Activated CD4-positive, alpha-beta T cell treated with anti-CD3 and anti-CD28 coated beads for 36 hours (primary cell): ENCODE measurements at regions of chr4 and their contacts with region 1.

Region 1: GRCh38 chr4:73662709-73663546 is 42.7 kb upstream of the RASSF6 start:
- DNase-seq: no peak
- ATAC-seq: peak; percentile 33
- H3K4me3 Mint-ChIP-seq: no peak overlapping the region
- H3K27ac Mint-ChIP-seq: no peak overlapping the region
- H3K4me1 Mint-ChIP-seq: peaks cover 3% of the 10 kb centered on the region
- H3K27me3 Mint-ChIP-seq: peaks cover 2% of the 10 kb centered on the region

Region 2: DNA sequence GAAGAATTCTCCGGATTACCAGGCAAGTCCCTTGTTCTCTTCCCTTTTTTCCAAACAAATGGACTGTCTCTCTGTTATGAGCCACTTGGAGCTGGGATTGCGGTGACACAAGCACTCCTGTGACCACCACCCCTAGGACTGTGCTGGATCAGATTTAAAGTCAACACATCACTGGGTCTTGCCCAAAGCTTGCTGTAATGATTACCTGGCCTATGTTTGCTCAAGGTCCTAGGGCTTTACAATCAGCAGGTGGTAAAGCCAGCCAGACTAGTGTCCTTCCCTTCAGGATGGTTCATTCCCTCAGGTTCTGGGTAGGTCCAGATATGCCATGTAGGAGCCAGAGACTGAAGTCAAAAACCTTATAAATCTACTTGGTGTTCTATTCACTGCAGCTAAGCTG is 738.1 kb before region 1 on chr4:
- CTCF ChIA-PET with region 1: no interaction called
- POLR2A ChIA-PET with region 1: no interaction called
- intact Hi-C with region 1: no loop called
- DNase-seq: no peak
- ATAC-seq: no peak
- H3K4me3 Mint-ChIP-seq: no peak overlapping the region
- H3K27ac Mint-ChIP-seq: no peak overlapping the region
- H3K4me1 Mint-ChIP-seq: no peaks in the 10 kb centered on the region
- H3K27me3 Mint-ChIP-seq: no peaks in the 10 kb centered on the region

Region 3: DNA sequence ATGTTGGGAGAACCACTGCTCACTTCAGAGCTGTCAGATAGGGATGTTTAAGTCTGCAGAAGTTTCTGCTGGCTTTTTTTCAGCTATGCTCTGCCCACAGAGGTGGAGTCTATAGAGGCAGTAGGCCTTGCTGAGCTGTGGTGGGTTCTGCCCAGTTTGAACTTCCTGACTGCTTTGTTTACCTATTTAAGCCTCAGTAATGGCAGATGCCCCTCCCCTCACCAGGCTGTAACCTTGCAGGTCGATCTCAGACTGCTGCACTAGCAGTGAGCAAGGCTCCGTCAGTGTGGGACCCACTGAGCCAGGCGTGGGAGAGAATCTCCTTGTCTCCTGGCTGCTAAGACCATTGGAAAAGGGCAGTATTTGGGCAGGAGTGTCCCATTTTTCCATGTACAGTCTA is 144.6 kb before region 1 on chr4:
- CTCF ChIA-PET with region 1: no interaction called
- POLR2A ChIA-PET with region 1: no interaction called
- intact Hi-C with region 1: no loop called
- DNase-seq: no peak
- ATAC-seq: no peak
- H3K4me3 Mint-ChIP-seq: no peak overlapping the region
- H3K27ac Mint-ChIP-seq: no peak overlapping the region
- H3K4me1 Mint-ChIP-seq: no peaks in the 10 kb centered on the region
- H3K27me3 Mint-ChIP-seq: peaks cover 9% of the 10 kb centered on the region

Region 4: GRCh38 chr4:73698217-73698616 is 35.3 kb after region 1 on chr4:
- CTCF ChIA-PET with region 1: no interaction called
- POLR2A ChIA-PET with region 1: no interaction called
- intact Hi-C with region 1: no loop called
- DNase-seq: no peak
- ATAC-seq: no peak
- H3K4me3 Mint-ChIP-seq: no peak overlapping the region
- H3K27ac Mint-ChIP-seq: no peak overlapping the region
- H3K4me1 Mint-ChIP-seq: no peaks in the 10 kb centered on the region
- H3K27me3 Mint-ChIP-seq: peaks cover 3% of the 10 kb centered on the region

Region 5: DNA sequence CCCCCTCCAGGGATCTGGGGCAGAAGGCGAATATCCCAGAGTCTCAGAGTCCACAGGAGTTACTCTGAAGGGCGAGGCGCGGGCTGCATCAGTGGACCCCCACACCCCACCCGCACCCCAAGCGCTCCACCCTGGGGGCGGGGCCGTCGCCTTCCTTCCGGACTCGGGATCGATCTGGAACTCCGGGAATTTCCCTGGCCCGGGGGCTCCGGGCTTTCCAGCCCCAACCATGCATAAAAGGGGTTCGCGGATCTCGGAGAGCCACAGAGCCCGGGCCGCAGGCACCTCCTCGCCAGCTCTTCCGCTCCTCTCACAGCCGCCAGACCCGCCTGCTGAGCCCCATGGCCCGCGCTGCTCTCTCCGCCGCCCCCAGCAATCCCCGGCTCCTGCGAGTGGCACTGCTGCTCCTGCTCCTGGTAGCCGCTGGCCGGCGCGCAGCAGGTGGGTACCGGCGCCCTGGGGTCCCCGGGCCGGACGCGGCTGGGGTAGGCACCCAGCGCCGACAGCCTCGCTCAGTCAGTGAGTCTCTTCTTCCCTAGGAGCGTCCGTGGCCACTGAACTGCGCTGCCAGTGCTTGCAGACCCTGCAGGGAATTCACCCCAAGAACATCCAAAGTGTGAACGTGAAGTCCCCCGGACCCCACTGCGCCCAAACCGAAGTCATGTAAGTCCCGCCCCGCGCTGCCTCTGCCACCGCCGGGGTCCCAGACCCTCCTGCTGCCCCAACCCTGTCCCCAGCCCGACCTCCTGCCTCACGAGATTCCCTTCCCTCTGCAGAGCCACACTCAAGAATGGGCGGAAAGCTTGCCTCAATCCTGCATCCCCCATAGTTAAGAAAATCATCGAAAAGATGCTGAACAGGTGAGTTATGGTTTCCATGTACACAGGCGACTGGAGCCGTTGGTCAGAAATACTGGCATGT is 206.5 kb after region 1 on chr4 and contains the start of gene CXCL1:
- CTCF ChIA-PET with region 1: no interaction called
- POLR2A ChIA-PET with region 1: no interaction called
- intact Hi-C with region 1: loop called in 1 of 2 experiments (anchors 10 kb)
- DNase-seq: peak; percentile 16
- ATAC-seq: no peak
- H3K4me3 Mint-ChIP-seq: peak within 1 kb of the TSS; percentile 32
- H3K27ac Mint-ChIP-seq: no peak within 1 kb of the TSS
- H3K4me1 Mint-ChIP-seq: no peaks in the 10 kb centered on the region
- H3K27me3 Mint-ChIP-seq: peaks cover 29% of the 10 kb centered on the region
- total RNA-seq, gene CXCL1: not detected